Mucosa of descending colon (tissue), 3 donors: ENCODE measurements at regions of chr12 and their contacts with region 1.

Region 1: DNA sequence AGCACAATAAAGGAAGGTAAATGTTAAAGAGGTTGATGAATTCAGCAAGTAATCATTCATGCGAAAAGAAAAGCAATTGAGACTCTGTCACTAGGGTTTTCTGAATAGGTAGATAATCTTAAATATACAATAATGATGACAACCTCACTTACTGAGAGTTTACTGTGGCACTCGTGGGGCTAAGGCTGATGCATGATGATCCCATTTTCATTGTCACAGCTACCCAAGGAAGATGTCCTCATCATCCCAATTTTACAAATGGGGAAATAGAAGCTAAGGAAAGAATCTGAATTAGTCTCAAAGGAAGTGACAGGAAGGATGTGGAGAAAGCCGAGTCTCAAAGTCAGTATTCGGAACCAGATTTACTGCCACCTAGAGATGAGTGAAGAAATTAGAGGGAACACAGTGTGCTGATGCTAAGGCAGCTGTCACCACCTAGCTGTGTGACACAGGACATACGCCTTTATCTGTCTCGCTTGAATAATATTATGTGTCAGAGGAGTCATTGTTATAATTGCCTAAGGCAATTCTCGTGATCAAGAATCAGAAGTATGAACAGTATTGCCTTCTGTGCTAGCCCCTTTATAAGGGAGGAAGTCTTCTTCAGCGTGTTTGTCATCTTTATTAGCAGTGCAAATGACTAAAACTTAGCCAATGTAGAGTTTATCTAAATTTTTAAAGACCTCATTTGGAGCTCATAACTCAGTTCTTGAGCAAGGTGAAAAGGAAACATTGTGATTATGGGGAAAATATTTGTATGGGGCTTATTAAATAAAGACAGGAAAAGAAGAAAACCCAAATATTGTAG is 63.2 kb downstream of the ERGIC2 start:
- DNase-seq: peak in 2 of 3 donors; percentile 31 to 58
- ATAC-seq: peak; percentile 99
- H3K4me3 ChIP-seq: no peak overlapping the region
- H3K4me1 ChIP-seq: no peaks in the 10 kb centered on the region
- CTCF ChIP-seq: peak; percentile 55

Region 2: GRCh38 chr12:29066011-29066588 is 251.7 kb before region 1 on chr12:
- intact Hi-C with region 1: loop called in 1 of 2 experiments (anchors 10 kb)
- DNase-seq: no peak
- ATAC-seq: no peak
- H3K4me3 ChIP-seq: no peak overlapping the region
- H3K4me1 ChIP-seq: no peaks in the 10 kb centered on the region
- CTCF ChIP-seq: no peak

Region 3: GRCh38 chr12:29088611-29089219 is 229.0 kb before region 1 on chr12:
- intact Hi-C with region 1: loop called in 1 of 2 experiments (anchors 10 kb)
- DNase-seq: no peak
- ATAC-seq: no peak
- H3K4me3 ChIP-seq: no peak overlapping the region
- H3K4me1 ChIP-seq: no peaks in the 10 kb centered on the region
- CTCF ChIP-seq: peak; percentile 7

Region 4: DNA sequence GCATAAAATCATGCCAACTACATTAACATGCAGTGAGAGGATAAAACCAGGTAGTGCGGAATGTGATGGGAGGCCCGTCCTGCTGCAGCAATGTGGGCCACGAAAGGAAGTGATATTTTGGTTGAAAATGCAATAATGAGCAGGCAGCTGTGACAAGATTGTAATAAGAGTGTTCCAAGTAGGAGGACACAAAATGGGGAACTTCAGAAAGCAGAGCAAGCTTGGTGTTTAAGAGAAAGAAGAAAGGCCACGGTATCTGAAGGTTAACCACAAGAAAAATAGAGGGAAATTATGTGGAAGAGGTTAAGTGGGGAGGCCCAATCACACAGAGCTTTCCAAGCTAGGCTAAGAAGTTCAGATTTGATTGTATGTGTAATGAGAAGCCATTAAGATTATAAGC is 145.4 kb after region 1 on chr12:
- intact Hi-C with region 1: no loop called
- DNase-seq: no peak
- ATAC-seq: no peak
- H3K4me3 ChIP-seq: no peak overlapping the region
- H3K4me1 ChIP-seq: no peaks in the 10 kb centered on the region
- CTCF ChIP-seq: no peak